HCT116 (cell line): ENCODE measurements at regions of chr5 and their contacts with region 1.

Region 1: GRCh38 chr5:82975396-82975795 is 101.8 kb downstream of the TMEM167A start:
- DNase-seq: no peak
- ATAC-seq: peak; percentile 20; the same call in 1 of the 2 replicates
- H3K4me3 ChIP-seq: peak overlapping the region; percentile 63 to 71
- H3K27ac ChIP-seq: peak overlapping the region; percentile 96
- H3K4me1 ChIP-seq: peaks cover 24 to 84% of the 10 kb centered on the region in 2 experiments
- H3K27me3 ChIP-seq: no peaks in the 10 kb centered on the region
- CTCF ChIP-seq: no peak
- POLR2A ChIP-seq: no peak
- RAD21 ChIP-seq: no peak

Region 2: DNA sequence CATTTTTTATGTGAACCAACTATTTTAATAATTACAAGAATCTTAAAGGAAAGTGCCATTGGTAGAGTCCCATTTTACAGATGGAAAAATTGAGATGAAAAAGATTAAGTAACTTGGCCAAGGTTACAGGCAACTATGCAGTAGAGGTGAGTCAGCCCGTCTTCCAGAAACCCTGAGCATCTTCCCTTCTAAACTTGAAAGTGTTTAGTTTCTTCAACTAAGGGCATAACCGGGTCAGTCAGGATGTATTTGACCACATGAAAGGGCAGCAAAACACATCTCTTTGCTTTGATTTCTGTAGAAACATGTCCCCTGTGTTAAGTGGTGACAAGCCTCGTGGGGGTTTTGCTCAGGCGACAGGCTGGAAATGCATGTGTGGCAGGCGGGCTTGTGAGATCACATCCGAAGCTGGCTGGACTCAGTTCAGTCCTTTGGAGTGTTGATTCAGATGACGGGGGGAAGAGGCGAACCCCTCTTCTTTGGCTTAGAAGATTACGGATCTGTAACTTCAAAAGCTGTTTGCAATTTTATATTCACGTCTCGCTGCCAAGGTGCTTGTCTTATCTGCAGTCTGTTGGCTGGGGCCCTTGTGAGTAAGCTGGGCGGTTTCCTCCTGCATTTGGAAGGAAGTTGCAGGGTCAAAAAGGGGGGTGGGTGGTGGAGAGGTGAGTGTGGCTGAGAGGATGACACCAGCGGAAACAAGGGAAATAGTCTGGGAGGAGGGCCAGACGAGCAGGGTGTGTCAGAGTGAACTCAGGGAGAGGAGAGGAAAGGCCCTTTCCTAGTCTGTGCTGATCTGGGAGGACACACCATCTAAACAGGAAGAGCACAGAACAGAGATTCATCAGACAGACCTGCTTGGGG is 618.4 kb before region 1 on chr5:
- CTCF ChIA-PET with region 1: no interaction called
- POLR2A ChIA-PET with region 1: no interaction called
- RAD21 ChIA-PET with region 1: no interaction called
- intact Hi-C with region 1: loop called (anchors 2 kb)
- DNase-seq: peak; percentile 98
- ATAC-seq: peak; percentile 85
- H3K4me3 ChIP-seq: peak overlapping the region; percentile 11 to 23; a peak in 3 of 4 replicates
- H3K27ac ChIP-seq: peak overlapping the region; percentile 65
- H3K4me1 ChIP-seq: peaks cover 23 to 85% of the 10 kb centered on the region in 2 experiments
- H3K27me3 ChIP-seq: no peaks in the 10 kb centered on the region
- CTCF ChIP-seq: no peak
- POLR2A ChIP-seq: peak; percentile 48
- RAD21 ChIP-seq: peak; percentile 27; the same call in 1 of the 2 replicates

Region 3: GRCh38 chr5:82707741-82708140 is 267.7 kb before region 1 on chr5:
- CTCF ChIA-PET with region 1: no interaction called
- POLR2A ChIA-PET with region 1: no interaction called
- RAD21 ChIA-PET with region 1: no interaction called
- intact Hi-C with region 1: no loop called
- DNase-seq: no peak
- ATAC-seq: peak; percentile 64; the same call in 1 of the 2 replicates
- H3K4me3 ChIP-seq: no peak overlapping the region
- H3K27ac ChIP-seq: no peak overlapping the region
- H3K4me1 ChIP-seq: peaks cover 3 to 8% of the 10 kb centered on the region in 2 experiments; a peak in 2 of 4 replicates
- H3K27me3 ChIP-seq: no peaks in the 10 kb centered on the region
- CTCF ChIP-seq: no peak
- POLR2A ChIP-seq: no peak
- RAD21 ChIP-seq: no peak

Region 4: GRCh38 chr5:83473346-83474163 is 498.2 kb after region 1 on chr5:
- CTCF ChIA-PET with region 1: no interaction called
- POLR2A ChIA-PET with region 1: no interaction called
- RAD21 ChIA-PET with region 1: no interaction called
- intact Hi-C with region 1: loop called (anchors 2 kb)
- DNase-seq: peak; percentile 86
- ATAC-seq: peak; percentile 65
- H3K4me3 ChIP-seq: peak overlapping the region; percentile 55 to 62
- H3K27ac ChIP-seq: peak overlapping the region; percentile 63
- H3K4me1 ChIP-seq: peaks cover 13 to 40% of the 10 kb centered on the region in 2 experiments
- H3K27me3 ChIP-seq: no peaks in the 10 kb centered on the region
- CTCF ChIP-seq: peak; percentile 44 to 86 (median 70); a peak in 5 of 6 replicates
- POLR2A ChIP-seq: no peak
- RAD21 ChIP-seq: peak; percentile 81